ENCODE measurements at regions of chr6 and their contacts with region 1.

Region 1: GRCh38 chr6:38493931-38494547 is 145.7 kb downstream of the BTBD9 start:
- DNase-seq: peak; percentile 28

Region 2: DNA sequence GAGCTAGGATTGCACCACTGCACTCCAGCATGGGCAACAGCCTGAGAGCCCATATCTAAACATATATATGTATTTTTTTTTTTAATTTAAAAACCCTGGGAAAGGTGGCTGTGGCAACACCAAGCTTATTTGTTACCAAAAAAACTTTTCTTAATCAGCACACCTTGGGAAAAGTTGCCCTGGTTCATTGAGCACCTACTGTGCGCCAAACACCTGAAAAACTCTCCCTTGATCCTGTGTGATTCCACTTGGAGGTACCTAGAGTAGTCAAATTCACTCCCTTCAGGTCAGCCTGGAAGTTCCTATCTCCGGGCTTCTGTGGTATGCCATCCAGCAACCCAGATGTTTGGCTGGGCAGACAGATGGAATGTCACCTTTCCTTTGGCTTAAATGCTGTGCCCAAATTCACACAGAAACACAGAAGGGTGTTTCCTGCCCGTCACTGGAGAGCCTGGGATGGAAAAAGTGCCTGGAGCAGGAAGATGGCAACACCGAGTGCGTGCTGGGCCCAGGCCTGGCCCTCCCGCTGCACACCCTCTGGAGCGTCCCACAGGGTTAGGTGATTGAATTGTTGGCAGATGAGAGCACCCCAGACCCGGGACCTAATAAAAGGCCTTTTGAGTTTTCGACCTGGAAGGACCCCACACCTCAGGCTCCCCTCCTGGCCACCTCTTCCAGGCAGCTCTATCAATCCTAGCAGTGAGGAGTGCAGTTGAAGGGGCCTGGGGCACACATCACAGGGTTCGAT is 337.0 kb before region 1 on chr6:
- CTCF ChIA-PET with region 1: interaction called, 14 read pairs
- POLR2A ChIA-PET with region 1: no interaction called
- DNase-seq: no peak